Calu3 (cell line): ENCODE measurements at regions of chr19 and their contacts with region 1.

Region 1: DNA sequence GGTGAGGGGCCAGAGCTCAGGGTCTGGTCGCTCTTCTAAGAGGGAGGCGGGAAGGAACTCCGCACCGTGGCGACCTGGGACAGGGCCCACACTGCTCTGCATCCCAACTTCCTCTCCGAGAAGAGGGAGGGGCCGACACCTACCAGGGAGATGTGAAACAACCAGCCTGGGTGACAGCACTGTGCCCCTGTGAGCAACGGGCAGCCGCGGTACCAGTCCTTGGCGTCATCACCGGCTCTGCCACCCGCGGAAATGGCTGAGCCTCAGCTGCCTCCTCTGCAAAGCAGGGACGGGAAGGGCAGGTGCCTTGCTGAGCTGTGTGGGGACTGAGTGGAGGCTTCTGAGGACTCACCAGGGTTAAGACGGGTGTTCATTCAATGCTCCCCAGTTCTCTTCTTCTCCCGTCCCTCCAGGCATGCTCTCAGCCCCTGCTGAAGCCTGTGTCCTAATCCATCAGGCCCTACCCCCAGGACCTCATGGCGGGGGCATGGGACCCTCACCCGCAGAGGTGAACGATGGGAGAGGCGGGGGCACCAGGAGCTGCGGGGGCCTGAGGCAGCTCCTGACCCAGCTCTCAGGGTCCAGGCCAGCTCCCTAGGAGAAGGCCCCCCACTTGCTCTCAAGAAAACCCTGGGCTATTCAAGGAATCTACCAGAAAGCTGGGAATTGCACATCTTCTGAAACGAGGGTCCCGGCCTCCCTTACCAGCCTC is 9.3 kb downstream of the ZNF787 start:
- DNase-seq: peak; percentile 55
- H3K4me3 Mint-ChIP-seq: peak overlapping the region; percentile 45
- H3K27ac Mint-ChIP-seq: peak overlapping the region; percentile 50
- H3K4me1 Mint-ChIP-seq: peaks cover 70% of the 10 kb centered on the region
- H3K27me3 Mint-ChIP-seq: no peaks in the 10 kb centered on the region
- CTCF ChIP-seq: no peak

Region 2: GRCh38 chr19:56170261-56170660 is 58.5 kb after region 1 on chr19:
- CTCF ChIA-PET with region 1: no interaction called
- intact Hi-C with region 1: loop called (anchors 2 kb)
- DNase-seq: peak; percentile 65
- H3K4me3 Mint-ChIP-seq: peak overlapping the region; percentile 27
- H3K27ac Mint-ChIP-seq: no peak overlapping the region
- H3K4me1 Mint-ChIP-seq: peaks cover 11% of the 10 kb centered on the region
- H3K27me3 Mint-ChIP-seq: peaks cover 25% of the 10 kb centered on the region
- CTCF ChIP-seq: no peak

Region 3: GRCh38 chr19:56350416-56351045 is 238.8 kb after region 1 on chr19:
- CTCF ChIA-PET with region 1: no interaction called
- intact Hi-C with region 1: no loop called
- DNase-seq: peak; percentile 56
- H3K4me3 Mint-ChIP-seq: no peak overlapping the region
- H3K27ac Mint-ChIP-seq: no peak overlapping the region
- H3K4me1 Mint-ChIP-seq: no peaks in the 10 kb centered on the region
- H3K27me3 Mint-ChIP-seq: no peaks in the 10 kb centered on the region
- CTCF ChIP-seq: peak; percentile 72